Activated T-helper 2 cell treated with anti-CD3 and anti-CD28 coated beads, Interferon-gamma antibody, Interleukin-2, Interleukin-4, amounts not matched to agents 10 μg/mL and 5 μg/mL and 100 μg/mL, durations not matched to agents 14 hours and 24 hours and 36 hours (primary cell): ENCODE measurements at regions of chr10 and their contacts with region 1.

Region 1: GRCh38 chr10:23994479-23995046 is 214.4 kb upstream of the KIAA1217 start:
- DNase-seq: no peak
- H3K4me3 Mint-ChIP-seq: no peak overlapping the region
- H3K27ac Mint-ChIP-seq: no peak overlapping the region
- H3K4me1 Mint-ChIP-seq: no peaks in the 10 kb centered on the region
- H3K27me3 Mint-ChIP-seq: no peaks in the 10 kb centered on the region

Region 2: GRCh38 chr10:24027113-24027512 is 32.5 kb after region 1 on chr10:
- intact Hi-C with region 1: no loop called
- DNase-seq: no peak
- H3K4me3 Mint-ChIP-seq: no peak overlapping the region
- H3K27ac Mint-ChIP-seq: no peak overlapping the region
- H3K4me1 Mint-ChIP-seq: no peaks in the 10 kb centered on the region
- H3K27me3 Mint-ChIP-seq: no peaks in the 10 kb centered on the region

Region 3: DNA sequence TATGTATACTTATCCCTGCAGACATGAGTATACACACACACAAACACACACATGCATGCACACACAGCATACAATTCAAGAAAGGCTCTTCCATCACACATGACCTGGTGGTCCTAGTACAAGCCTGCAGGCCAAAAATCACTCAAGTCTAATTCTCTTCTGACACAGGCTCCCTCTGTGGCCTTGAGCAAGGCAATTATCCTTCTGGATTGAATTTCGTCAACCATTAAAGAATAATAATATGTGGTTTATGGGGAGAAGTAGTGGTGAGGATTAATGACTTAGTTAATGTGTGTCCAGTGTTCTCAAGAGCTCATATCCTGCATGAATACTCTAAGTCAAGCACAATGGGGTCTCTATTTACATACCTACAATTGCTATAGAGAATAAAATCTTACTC is 52.6 kb after region 1 on chr10:
- intact Hi-C with region 1: no loop called
- DNase-seq: no peak
- H3K4me3 Mint-ChIP-seq: no peak overlapping the region
- H3K27ac Mint-ChIP-seq: no peak overlapping the region
- H3K4me1 Mint-ChIP-seq: no peaks in the 10 kb centered on the region
- H3K27me3 Mint-ChIP-seq: no peaks in the 10 kb centered on the region

Region 4: DNA sequence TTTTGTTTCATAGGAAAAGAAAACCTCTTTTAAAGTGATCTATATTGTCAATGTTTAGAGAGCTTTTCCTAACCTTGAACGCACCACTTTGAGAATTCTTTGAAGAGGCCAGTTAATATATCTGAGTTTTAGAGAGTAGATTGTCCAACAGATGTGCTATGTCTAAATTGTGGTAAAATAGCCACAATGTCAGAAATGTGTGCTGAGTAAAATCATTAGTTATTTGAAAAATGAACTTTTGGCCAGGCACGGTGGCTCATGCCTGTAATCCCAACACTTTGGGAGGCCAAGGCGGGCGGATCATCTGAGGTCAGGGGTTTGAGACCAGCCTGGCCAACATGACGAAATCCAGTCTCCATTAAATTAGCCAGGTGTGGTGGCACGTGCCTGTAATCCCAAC is 152.8 kb after region 1 on chr10:
- intact Hi-C with region 1: no loop called
- DNase-seq: no peak
- H3K4me3 Mint-ChIP-seq: no peak overlapping the region
- H3K27ac Mint-ChIP-seq: no peak overlapping the region
- H3K4me1 Mint-ChIP-seq: no peaks in the 10 kb centered on the region
- H3K27me3 Mint-ChIP-seq: no peaks in the 10 kb centered on the region

Region 5: DNA sequence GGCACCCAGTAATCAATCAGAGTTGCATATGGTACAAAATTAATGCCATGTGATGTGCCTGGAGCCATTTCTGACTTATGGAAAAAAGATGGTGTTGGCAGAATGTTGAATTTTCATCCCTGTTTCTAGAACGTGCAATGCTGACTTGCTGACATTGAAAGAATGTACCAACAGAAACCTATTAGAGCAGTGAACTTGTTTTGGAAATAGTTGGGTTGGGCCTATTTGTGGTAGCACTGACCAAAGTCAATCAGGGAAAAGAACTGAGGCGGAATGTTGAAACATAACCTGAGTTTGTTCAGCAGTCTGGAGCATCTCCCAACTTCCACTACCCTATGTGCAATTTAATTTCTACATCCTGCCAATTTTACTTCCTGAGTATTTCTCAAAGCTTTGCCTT is 202.7 kb after region 1 on chr10:
- intact Hi-C with region 1: loop called (anchors 5 kb)
- DNase-seq: no peak
- H3K4me3 Mint-ChIP-seq: no peak overlapping the region
- H3K27ac Mint-ChIP-seq: no peak overlapping the region
- H3K4me1 Mint-ChIP-seq: no peaks in the 10 kb centered on the region
- H3K27me3 Mint-ChIP-seq: peaks cover 1% of the 10 kb centered on the region

Region 6: GRCh38 chr10:24503461-24504320 is 509.1 kb after region 1 on chr10:
- intact Hi-C with region 1: loop called (anchors 5 kb)
- DNase-seq: no peak
- H3K4me3 Mint-ChIP-seq: no peak overlapping the region
- H3K27ac Mint-ChIP-seq: no peak overlapping the region
- H3K4me1 Mint-ChIP-seq: no peaks in the 10 kb centered on the region
- H3K27me3 Mint-ChIP-seq: peaks cover 14% of the 10 kb centered on the region

Region 7: DNA sequence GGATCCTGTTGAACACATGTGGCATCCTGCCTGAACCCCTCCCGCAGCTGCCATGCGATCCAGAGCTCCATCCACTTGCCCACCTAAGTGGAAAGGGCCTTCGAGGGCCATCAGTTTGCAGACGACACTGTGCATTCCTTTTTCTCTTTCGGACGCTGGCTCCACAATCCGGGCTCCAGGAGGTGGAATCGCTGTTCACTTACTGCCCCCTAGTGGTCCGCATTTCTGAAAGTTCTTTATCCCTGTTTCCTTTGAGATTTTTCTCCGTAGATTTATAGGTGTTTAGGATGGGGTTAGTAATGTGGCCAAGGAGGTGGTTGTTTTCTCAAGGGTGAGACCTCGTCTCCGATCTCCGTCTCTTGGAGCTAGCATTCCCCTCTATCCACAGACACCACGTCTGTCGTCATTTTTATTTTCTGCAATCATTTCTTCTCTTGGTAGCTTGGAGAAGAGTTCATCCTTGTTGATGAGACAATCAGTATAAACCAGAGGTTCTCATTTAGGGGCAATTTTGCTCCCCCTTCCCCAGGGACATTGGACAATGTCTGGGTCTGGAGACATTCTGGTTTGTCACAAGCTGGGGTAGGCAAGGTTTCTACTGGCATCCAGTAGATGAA is 524.5 kb after region 1 on chr10:
- intact Hi-C with region 1: loop called (anchors 5 kb)
- DNase-seq: peak; percentile 11
- H3K4me3 Mint-ChIP-seq: no peak overlapping the region
- H3K27ac Mint-ChIP-seq: no peak overlapping the region
- H3K4me1 Mint-ChIP-seq: peaks cover 10% of the 10 kb centered on the region
- H3K27me3 Mint-ChIP-seq: peaks cover 1% of the 10 kb centered on the region